Breast epithelium (tissue), 4 donors: ENCODE measurements at regions of chr2 and their contacts with region 1.

Region 1: GRCh38 chr2:152890736-152891135 is 172.3 kb downstream of the ARL6IP6 start:
- DNase-seq: no peak
- H3K4me3 ChIP-seq: no peak overlapping the region
- H3K27ac ChIP-seq: no peak overlapping the region
- H3K4me1 ChIP-seq: no peaks in the 10 kb centered on the region
- H3K27me3 ChIP-seq: no peaks in the 10 kb centered on the region
- CTCF ChIP-seq: no peak
- POLR2A ChIP-seq: no peak

Region 2: GRCh38 chr2:152924722-152925121 is 34.0 kb after region 1 on chr2:
- intact Hi-C with region 1: loop called (anchors 2 kb)
- DNase-seq: peak in 1 of 2 donors; percentile 81
- H3K4me3 ChIP-seq: no peak overlapping the region
- H3K27ac ChIP-seq: peak overlapping the region; percentile 22 to 48
- H3K4me1 ChIP-seq: no peaks in the 10 kb centered on the region
- H3K27me3 ChIP-seq: no peaks in the 10 kb centered on the region
- CTCF ChIP-seq: no peak
- POLR2A ChIP-seq: no peak

Region 3: GRCh38 chr2:153519257-153519875 is 628.6 kb after region 1 on chr2:
- intact Hi-C with region 1: loop called (anchors 5 kb)
- DNase-seq: no peak
- H3K4me3 ChIP-seq: no peak overlapping the region
- H3K27ac ChIP-seq: no peak overlapping the region
- H3K4me1 ChIP-seq: no peaks in the 10 kb centered on the region
- H3K27me3 ChIP-seq: no peaks in the 10 kb centered on the region
- CTCF ChIP-seq: peak; percentile 51 to 73 (median 64)
- POLR2A ChIP-seq: no peak